ENCODE measurements at regions of chr1 and their contacts with region 1.

Region 1: GRCh38 chr1:205783904-205784303 is 8.6 kb upstream of the RAB29 start:
- H3K4me3 ChIP-seq: no peak overlapping the region
- H3K27ac ChIP-seq: no peak overlapping the region
- H3K4me1 ChIP-seq: 0 out of 2 replicates have a peak, but pooled peaks cover 4% of the 10 kb centered on the region
- CTCF ChIP-seq: no peak

Region 2: DNA sequence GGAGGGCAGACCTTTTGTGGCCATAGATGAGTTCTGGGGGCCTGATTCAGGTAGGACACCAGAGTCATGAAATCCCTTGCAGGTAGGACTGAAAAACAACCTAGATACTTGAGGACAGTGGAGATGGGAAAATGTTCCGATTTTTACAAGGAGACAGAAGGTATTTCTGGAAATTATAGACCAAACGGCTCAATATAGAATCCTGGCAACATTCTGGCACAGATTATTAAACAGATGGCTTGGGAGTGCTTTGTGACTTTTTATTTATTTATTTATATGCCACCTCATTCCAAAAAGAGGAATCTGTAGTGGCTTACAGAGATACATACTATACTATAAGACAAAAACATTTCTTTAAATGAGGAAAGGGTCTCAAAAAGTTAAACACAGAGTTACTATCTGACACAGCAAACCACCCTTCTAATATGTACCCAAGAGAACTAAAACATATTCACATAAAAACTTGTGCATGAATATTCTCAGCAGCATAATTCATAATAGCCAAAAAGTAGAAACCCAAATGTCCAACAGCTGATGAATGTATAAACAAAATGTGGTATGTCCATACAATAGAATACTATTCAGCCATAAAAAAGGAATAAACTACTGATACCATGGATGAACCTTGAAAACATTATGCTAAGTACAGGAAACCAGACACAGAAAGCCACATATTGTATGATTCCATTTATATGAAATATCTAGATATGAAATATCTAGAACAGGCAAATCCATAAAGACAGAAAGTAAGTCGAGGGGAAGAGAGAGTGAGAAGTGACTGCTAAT is 229.7 kb before region 1 on chr1:
- CTCF ChIA-PET with region 1: no interaction called
- POLR2A ChIA-PET with region 1: no interaction called
- H3K4me3 ChIP-seq: no peak overlapping the region
- H3K27ac ChIP-seq: no peak overlapping the region
- H3K4me1 ChIP-seq: no peaks in the 10 kb centered on the region
- CTCF ChIP-seq: no peak

Region 3: DNA sequence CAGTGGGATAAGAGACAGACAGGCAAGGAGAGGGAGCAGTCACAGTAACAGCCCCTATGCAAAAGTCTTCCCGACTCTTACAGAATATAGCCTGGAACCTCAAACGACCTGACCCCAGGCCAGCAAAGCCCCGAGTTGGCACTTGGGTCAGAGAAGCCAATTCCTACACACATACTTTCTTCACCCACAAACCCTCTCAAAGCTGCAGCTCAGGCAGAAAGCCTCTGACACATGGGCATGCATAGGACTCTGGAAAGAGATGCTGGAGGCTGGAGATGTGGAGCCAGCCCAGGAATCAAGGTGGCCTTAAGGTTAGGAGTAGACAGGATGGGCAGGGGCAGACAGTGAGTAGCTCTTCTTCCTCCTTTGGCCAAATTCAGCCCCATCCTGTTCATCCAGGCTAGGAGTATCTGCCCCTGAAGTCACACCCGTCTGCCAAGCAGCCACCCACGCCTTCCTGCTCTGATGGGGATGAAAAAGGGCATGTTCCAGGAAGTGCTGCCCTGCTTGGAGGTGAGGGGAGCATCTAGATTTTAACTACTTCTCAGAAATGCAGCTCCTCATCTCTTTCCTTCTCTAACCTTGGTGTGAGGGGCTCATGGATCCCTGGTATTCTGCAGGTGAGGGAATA is 21.3 kb after region 1 on chr1:
- CTCF ChIA-PET with region 1: no interaction called
- POLR2A ChIA-PET with region 1: interaction called, 12 read pairs
- H3K4me3 ChIP-seq: no peak overlapping the region
- H3K27ac ChIP-seq: no peak overlapping the region
- H3K4me1 ChIP-seq: peaks cover 6% of the 10 kb centered on the region; the same call in 1 of the 2 replicates
- CTCF ChIP-seq: no peak

Region 4: GRCh38 chr1:205817364-205817763 is 33.5 kb after region 1 on chr1:
- CTCF ChIA-PET with region 1: no interaction called
- POLR2A ChIA-PET with region 1: no interaction called
- H3K4me3 ChIP-seq: no peak overlapping the region
- H3K27ac ChIP-seq: no peak overlapping the region
- H3K4me1 ChIP-seq: no peaks in the 10 kb centered on the region
- CTCF ChIP-seq: no peak